ENCODE measurements at regions of chr4 and their contacts with region 1.

Region 1: GRCh38 chr4:17576932-17577665 is at the start of gene LAP3:
- DNase-seq: peak; percentile 97
- H3K4me3 ChIP-seq: peak within 1 kb of the TSS; percentile 79
- H3K27ac ChIP-seq: peak within 1 kb of the TSS; percentile 71
- H3K4me1 ChIP-seq: peaks cover 39% of the 10 kb centered on the region
- CTCF ChIP-seq: no peak
- total RNA-seq, gene LAP3: 111 and 115 TPM in 2 replicates

Region 2: GRCh38 chr4:16225863-16226815 is 1351.0 kb before region 1 on chr4 and contains the start of gene TAPT1:
- CTCF ChIA-PET with region 1: no interaction called
- POLR2A ChIA-PET with region 1: no interaction called
- intact Hi-C with region 1: loop called (anchors 10 kb)
- DNase-seq: peak; percentile 81
- H3K4me3 ChIP-seq: peak within 1 kb of the TSS; percentile 71
- H3K27ac ChIP-seq: peak within 1 kb of the TSS; percentile 77
- H3K4me1 ChIP-seq: peaks cover 63% of the 10 kb centered on the region
- CTCF ChIP-seq: no peak
- total RNA-seq, gene TAPT1: 23.2 and 34.3 TPM in 2 replicates

Region 3: DNA sequence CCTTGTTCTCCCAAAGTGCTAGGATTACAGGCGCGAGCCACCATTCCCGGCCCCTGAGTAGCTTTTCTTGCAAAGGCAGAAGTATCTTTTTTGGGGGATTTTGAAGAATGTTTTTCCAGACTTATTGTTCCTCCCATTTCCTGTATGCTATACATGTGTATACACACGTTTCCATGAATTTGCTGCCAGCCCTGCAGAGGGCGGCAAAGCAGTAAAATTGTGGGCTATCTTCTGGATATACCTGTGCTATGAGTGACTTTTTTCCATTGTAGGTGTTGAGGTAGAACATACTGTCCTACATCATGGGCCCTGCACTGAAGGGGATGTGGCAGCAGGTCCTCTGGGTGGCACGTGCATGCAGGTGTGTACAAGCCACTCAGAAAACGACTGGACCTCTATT is 20.4 kb after region 1 on chr4:
- CTCF ChIA-PET with region 1: interaction called, 5 read pairs
- POLR2A ChIA-PET with region 1: interaction called, 16 read pairs
- intact Hi-C with region 1: loop called (anchors 1 kb)
- DNase-seq: no peak
- H3K4me3 ChIP-seq: no peak overlapping the region
- H3K27ac ChIP-seq: no peak overlapping the region
- H3K4me1 ChIP-seq: peaks cover 36% of the 10 kb centered on the region
- CTCF ChIP-seq: peak; percentile 63

Region 4: DNA sequence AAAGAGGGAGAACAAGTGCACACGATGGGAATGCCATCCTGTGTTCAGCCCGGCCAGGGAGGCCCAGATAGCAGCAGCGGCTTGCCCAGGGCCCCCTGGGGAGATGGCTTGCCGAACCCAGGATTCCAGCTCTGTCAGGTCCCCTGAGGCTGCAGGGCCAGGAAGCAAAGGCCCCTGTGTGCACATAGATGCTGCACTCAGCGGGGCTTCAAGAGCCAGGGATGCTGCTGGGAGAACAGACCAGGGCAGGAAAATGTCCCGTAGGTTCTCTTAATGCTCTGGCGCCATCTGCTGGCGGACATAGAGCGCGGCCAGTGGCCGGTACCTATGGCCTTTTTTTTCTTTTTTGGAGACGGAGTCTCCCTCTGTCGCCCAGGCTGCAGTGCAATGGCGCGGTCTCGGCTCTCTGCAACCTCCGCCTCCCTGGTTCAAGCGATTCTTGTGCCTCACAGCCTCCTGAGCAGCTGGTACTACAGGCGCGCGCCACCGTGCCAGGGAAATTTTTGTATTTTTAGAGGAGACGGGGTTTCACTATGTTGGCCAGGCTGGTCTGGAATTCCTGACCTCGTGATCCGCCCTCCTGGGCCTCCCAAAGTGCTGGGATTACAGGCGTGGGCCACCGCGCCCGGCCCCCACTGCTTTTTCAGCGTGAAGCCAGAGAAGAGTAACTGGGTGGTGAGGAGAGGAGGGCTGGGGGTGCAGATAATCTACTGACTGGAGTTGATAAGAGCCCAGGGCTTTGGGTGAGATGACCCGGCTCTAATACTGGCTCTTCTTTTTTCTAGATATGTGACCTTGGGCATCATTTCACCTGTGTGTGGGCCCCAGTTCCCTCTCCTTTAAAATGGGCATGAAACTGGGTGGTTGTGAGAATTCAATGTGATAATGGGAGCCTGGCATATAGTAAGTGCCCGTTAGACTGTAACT is 59.9 kb after region 1 on chr4:
- CTCF ChIA-PET with region 1: no interaction called
- POLR2A ChIA-PET with region 1: interaction called, 3 read pairs
- intact Hi-C with region 1: loop called (anchors 5 kb)
- DNase-seq: peak; percentile 81
- H3K4me3 ChIP-seq: no peak overlapping the region
- H3K27ac ChIP-seq: no peak overlapping the region
- H3K4me1 ChIP-seq: no peaks in the 10 kb centered on the region
- CTCF ChIP-seq: peak; percentile 88

Region 5: GRCh38 chr4:18021722-18022571 is 444.8 kb after region 1 on chr4 and contains the start of gene LCORL:
- CTCF ChIA-PET with region 1: no interaction called
- POLR2A ChIA-PET with region 1: interaction called, 3 read pairs
- intact Hi-C with region 1: loop called (anchors 5 kb)
- DNase-seq: peak; percentile 96
- H3K4me3 ChIP-seq: peak within 1 kb of the TSS; percentile 99
- H3K27ac ChIP-seq: peak within 1 kb of the TSS; percentile 79
- H3K4me1 ChIP-seq: peaks cover 23% of the 10 kb centered on the region
- CTCF ChIP-seq: peak; percentile 60
- total RNA-seq, gene LCORL: 16.0 and 31.4 TPM in 2 replicates